Calu3 (cell line): ENCODE measurements at regions of chr19 and their contacts with region 1.

Region 1: DNA sequence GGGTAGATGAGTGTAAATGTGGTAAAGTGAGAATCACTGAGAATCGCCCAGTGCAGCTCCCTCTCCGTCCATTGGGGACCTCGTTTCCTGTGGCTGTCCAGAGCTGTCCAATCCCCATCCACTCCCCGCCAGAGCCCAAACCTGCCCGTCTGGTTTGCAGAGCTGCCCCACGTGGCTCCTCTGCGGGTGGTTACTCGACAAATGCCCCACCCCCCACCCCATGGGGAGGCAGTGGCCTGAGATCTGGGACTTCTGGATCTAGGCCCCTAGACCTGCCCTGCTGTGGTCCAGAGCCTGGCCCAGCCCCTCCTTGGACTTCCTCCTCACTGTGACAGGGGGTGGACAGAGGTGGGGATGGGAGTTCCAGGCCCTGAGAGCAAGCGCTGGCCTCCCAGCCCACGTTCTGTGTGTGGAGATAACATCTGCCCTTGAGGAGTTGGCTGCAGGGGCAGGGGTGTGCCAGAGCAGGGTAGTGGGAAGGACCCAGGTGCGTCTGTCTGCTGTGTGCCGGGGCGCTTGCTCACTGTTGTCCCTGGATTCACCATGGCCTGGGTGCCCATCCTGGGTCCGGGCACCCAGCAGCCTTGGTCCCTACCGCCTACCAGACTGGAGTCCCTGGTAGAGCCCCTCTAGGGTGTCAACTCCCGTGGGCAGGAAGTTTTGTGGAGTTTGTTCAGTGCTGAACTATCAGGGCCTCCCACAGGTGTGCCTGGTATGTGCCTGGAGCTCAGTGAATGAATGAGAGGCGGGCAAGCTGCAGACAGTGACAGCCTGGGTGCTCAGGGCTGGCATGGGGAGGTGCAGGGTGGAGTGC is 29.2 kb downstream of the PAK4 start:
- DNase-seq: peak; percentile 96
- H3K4me3 Mint-ChIP-seq: peak overlapping the region; percentile 61
- H3K27ac Mint-ChIP-seq: peak overlapping the region; percentile 77
- H3K4me1 Mint-ChIP-seq: peaks cover 57% of the 10 kb centered on the region
- H3K27me3 Mint-ChIP-seq: no peaks in the 10 kb centered on the region
- CTCF ChIP-seq: peak; percentile 57

Region 2: GRCh38 chr19:38989066-38989605 is 165.7 kb before region 1 on chr19:
- CTCF ChIA-PET with region 1: no interaction called
- intact Hi-C with region 1: no loop called
- DNase-seq: peak; percentile 61
- H3K4me3 Mint-ChIP-seq: no peak overlapping the region
- H3K27ac Mint-ChIP-seq: no peak overlapping the region
- H3K4me1 Mint-ChIP-seq: peaks cover 24% of the 10 kb centered on the region
- H3K27me3 Mint-ChIP-seq: peaks cover 13% of the 10 kb centered on the region
- CTCF ChIP-seq: no peak

Region 3: GRCh38 chr19:39319892-39320248 is 165.1 kb after region 1 on chr19:
- CTCF ChIA-PET with region 1: no interaction called
- intact Hi-C with region 1: no loop called
- DNase-seq: no peak
- H3K4me3 Mint-ChIP-seq: peak overlapping the region; percentile 79
- H3K27ac Mint-ChIP-seq: no peak overlapping the region
- H3K4me1 Mint-ChIP-seq: peaks cover 18% of the 10 kb centered on the region
- H3K27me3 Mint-ChIP-seq: peaks cover 63% of the 10 kb centered on the region
- CTCF ChIP-seq: no peak

Region 4: DNA sequence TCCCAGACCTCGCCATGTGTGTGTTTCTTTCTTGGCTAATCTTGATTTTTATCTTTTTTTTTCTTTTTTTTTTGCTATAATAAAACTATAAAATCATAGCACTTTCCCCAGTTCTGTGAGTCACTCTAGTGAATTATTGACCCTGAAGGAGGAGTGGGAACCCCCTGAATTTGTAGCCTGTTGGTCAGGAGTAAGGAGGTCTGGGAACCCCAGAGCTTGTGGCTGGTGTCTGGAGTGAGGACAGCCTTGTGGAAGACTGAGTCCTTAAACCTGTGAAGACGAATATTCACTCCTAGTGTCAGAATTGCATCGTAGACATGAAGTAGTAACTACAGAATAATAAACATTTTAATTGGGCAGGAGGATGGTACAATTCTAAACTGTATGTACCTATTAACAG is 370.4 kb after region 1 on chr19:
- CTCF ChIA-PET with region 1: no interaction called
- intact Hi-C with region 1: loop called (anchors 5 kb)
- DNase-seq: no peak
- H3K4me3 Mint-ChIP-seq: no peak overlapping the region
- H3K27ac Mint-ChIP-seq: no peak overlapping the region
- H3K4me1 Mint-ChIP-seq: no peaks in the 10 kb centered on the region
- H3K27me3 Mint-ChIP-seq: no peaks in the 10 kb centered on the region
- CTCF ChIP-seq: no peak